Natural killer cell (primary cell): ENCODE measurements at regions of chr2 and their contacts with region 1.

Region 1: GRCh38 chr2:24046930-24047702 is at the start of gene WDCP:
- DNase-seq: peak; percentile 88 to 97
- ATAC-seq: peak; percentile 97 to 100 (median 99)
- H3K4me3 ChIP-seq: peak within 1 kb of the TSS; percentile 74
- H3K4me3 Mint-ChIP-seq: peak within 1 kb of the TSS; percentile 99
- H3K27ac ChIP-seq: peak within 1 kb of the TSS; percentile 36
- H3K27ac Mint-ChIP-seq: peak within 1 kb of the TSS; percentile 93 to 94
- H3K4me1 ChIP-seq: peaks cover 20% of the 10 kb centered on the region
- H3K4me1 Mint-ChIP-seq: peaks cover 24 to 28% of the 10 kb centered on the region in 2 donors
- H3K27me3 ChIP-seq: no peaks in the 10 kb centered on the region
- H3K27me3 Mint-ChIP-seq: no peaks in the 10 kb centered on the region
- CTCF ChIP-seq: no peak
- total RNA-seq, gene WDCP: 2.4 to 11.8 (median 11.2) TPM

Region 2: GRCh38 chr2:23595601-23596251 is 451.4 kb before region 1 on chr2:
- intact Hi-C with region 1: no loop called
- DNase-seq: no peak
- ATAC-seq: no peak
- H3K4me3 ChIP-seq: no peak overlapping the region
- H3K4me3 Mint-ChIP-seq: no peak overlapping the region
- H3K27ac ChIP-seq: no peak overlapping the region
- H3K27ac Mint-ChIP-seq: no peak overlapping the region
- H3K4me1 ChIP-seq: no peaks in the 10 kb centered on the region
- H3K4me1 Mint-ChIP-seq: no peaks in the 10 kb centered on the region
- H3K27me3 ChIP-seq: no peaks in the 10 kb centered on the region
- H3K27me3 Mint-ChIP-seq: peaks cover 0 to 10% of the 10 kb centered on the region in 2 donors
- CTCF ChIP-seq: no peak

Region 3: GRCh38 chr2:23926750-23927571 is 120.2 kb before region 1 on chr2 and contains the start of gene ATAD2B:
- intact Hi-C with region 1: loop called (anchors 1 kb)
- DNase-seq: peak; percentile 91 to 98
- ATAC-seq: peak; percentile 79 to 93 (median 83)
- H3K4me3 ChIP-seq: peak within 1 kb of the TSS; percentile 98
- H3K4me3 Mint-ChIP-seq: peak within 1 kb of the TSS; percentile 98
- H3K27ac ChIP-seq: peak within 1 kb of the TSS; percentile 97
- H3K27ac Mint-ChIP-seq: peak within 1 kb of the TSS; percentile 99 to 100
- H3K4me1 ChIP-seq: peaks cover 19% of the 10 kb centered on the region
- H3K4me1 Mint-ChIP-seq: peaks cover 50 to 53% of the 10 kb centered on the region in 2 donors
- H3K27me3 ChIP-seq: no peaks in the 10 kb centered on the region
- H3K27me3 Mint-ChIP-seq: no peaks in the 10 kb centered on the region
- CTCF ChIP-seq: peak; percentile 55
- total RNA-seq, gene ATAD2B: 71.5 to 85.7 (median 84.0) TPM

Region 4: GRCh38 chr2:23939987-23940717 is 107.0 kb before region 1 on chr2 and contains the start of gene UBXN2A:
- intact Hi-C with region 1: loop called (anchors 1 kb)
- DNase-seq: peak; percentile 83 to 92
- ATAC-seq: peak; percentile 89 to 95 (median 91)
- H3K4me3 ChIP-seq: peak within 1 kb of the TSS; percentile 66
- H3K4me3 Mint-ChIP-seq: peak within 1 kb of the TSS; percentile 97
- H3K27ac ChIP-seq: peak within 1 kb of the TSS; percentile 63
- H3K27ac Mint-ChIP-seq: peak within 1 kb of the TSS; percentile 85 to 88
- H3K4me1 ChIP-seq: peaks cover 8% of the 10 kb centered on the region
- H3K4me1 Mint-ChIP-seq: peaks cover 20 to 27% of the 10 kb centered on the region in 2 donors
- H3K27me3 ChIP-seq: peaks cover 2% of the 10 kb centered on the region
- H3K27me3 Mint-ChIP-seq: peaks cover 0 to 9% of the 10 kb centered on the region in 2 donors
- CTCF ChIP-seq: no peak
- total RNA-seq, gene UBXN2A: 14.7 to 18.0 (median 16.2) TPM

Region 5: DNA sequence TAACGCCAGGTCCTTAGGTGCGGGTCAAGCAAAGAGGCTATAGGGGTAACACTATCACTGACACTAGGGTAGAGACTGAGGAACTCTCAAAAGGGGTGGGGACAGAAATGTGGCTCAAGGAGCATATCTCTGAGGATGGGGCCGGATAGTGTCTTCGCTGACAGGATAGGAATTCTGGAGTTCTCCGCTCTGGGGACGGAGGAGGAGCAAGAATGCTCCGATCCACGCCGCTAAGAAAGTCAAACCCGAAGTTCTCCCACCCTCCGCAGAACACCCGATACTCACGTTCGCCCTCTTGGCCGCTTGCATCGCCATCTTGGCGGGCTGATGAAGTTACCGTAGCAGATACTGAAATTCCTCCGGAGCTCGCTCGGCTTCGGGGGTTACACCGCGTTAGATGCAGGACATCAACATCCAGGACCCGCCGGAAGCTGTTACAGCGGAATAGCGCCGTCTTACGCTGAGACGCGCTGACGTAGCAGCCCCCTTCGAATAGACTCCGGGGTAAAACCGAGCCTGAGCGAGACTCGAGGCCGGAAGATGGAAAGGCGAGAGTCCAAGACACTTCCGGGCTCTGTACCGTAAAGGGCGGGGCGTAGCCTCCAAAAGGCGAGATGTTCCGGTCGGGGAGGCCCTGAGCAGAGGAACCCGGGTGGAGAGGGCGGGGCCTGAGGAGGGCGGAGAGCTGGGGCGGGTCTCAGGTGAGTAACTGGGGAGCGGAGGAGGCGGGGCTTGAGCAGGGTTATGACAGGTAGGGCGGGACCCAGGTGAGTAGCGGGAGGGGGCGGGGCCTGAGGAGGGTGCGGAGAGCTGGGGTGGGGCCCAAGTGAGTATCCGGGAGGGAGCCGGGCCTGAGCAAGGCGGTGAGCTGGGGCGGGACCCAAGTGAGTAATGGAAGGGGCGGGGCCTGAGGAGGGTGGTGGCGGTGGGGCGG is 29.1 kb after region 1 on chr2 and contains the start of gene SF3B6:
- intact Hi-C with region 1: loop called (anchors 1 kb)
- DNase-seq: peak; percentile 96 to 100
- ATAC-seq: peak; percentile 83 to 95 (median 88)
- H3K4me3 ChIP-seq: peak within 1 kb of the TSS; percentile 94
- H3K4me3 Mint-ChIP-seq: peak within 1 kb of the TSS; percentile 94
- H3K27ac ChIP-seq: peak within 1 kb of the TSS; percentile 89
- H3K27ac Mint-ChIP-seq: peak within 1 kb of the TSS; percentile 94 to 98
- H3K4me1 ChIP-seq: peaks cover 17% of the 10 kb centered on the region
- H3K4me1 Mint-ChIP-seq: peaks cover 12 to 32% of the 10 kb centered on the region in 2 donors
- H3K27me3 ChIP-seq: no peaks in the 10 kb centered on the region
- H3K27me3 Mint-ChIP-seq: no peaks in the 10 kb centered on the region
- CTCF ChIP-seq: no peak
- total RNA-seq, gene SF3B6: 57.2 to 65.1 (median 57.4) TPM

Region 6: DNA sequence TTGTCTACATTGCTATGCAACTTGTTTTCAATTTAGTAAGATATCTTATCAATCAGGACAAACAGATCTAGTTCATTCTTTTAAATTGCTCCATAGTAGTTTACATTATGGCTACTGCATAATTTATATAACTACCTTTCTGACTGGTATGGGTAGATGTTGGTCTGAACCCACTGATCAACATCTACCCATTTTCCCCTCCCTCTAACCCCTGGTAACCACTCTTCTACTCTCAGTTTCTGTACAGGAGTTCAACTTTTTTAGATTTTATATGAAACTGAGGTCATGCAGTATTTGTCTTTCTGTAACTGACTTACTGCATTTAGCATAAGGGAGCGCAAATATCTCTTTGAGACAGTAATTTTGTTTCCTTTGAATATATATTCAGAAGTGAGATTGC is 240.1 kb after region 1 on chr2:
- intact Hi-C with region 1: no loop called
- DNase-seq: no peak
- ATAC-seq: no peak
- H3K4me3 ChIP-seq: no peak overlapping the region
- H3K4me3 Mint-ChIP-seq: no peak overlapping the region
- H3K27ac ChIP-seq: no peak overlapping the region
- H3K27ac Mint-ChIP-seq: no peak overlapping the region
- H3K4me1 ChIP-seq: no peaks in the 10 kb centered on the region
- H3K4me1 Mint-ChIP-seq: peaks cover 0 to 5% of the 10 kb centered on the region in 2 donors
- H3K27me3 ChIP-seq: no peaks in the 10 kb centered on the region
- H3K27me3 Mint-ChIP-seq: no peaks in the 10 kb centered on the region
- CTCF ChIP-seq: no peak